GM12878 (cell line): ENCODE measurements at regions of chr21 and their contacts with region 1.

Region 1: GRCh38 chr21:27954543-27955165 is 987.8 kb upstream of the ADAMTS5 start:
- DNase-seq: no peak
- ATAC-seq: no peak
- H3K4me3 ChIP-seq: no peak overlapping the region
- H3K27ac ChIP-seq: no peak overlapping the region
- H3K4me1 ChIP-seq: no peaks in the 10 kb centered on the region
- H3K27me3 ChIP-seq: no peaks in the 10 kb centered on the region
- CTCF ChIP-seq: no peak
- EP300 ChIP-seq: no peak
- POLR2A ChIP-seq: no peak
- RAD21 ChIP-seq: no peak

Region 2: GRCh38 chr21:27787046-27787445 is 167.6 kb before region 1 on chr21:
- CTCF ChIA-PET with region 1: no interaction called
- POLR2A ChIA-PET with region 1: no interaction called
- RAD21 ChIA-PET with region 1: no interaction called
- SMC1A ChIA-PET with region 1: no interaction called
- in situ Hi-C with region 1: no loop called
- intact Hi-C with region 1: no loop called
- DNase-seq: no peak
- ATAC-seq: no peak
- H3K4me3 ChIP-seq: no peak overlapping the region
- H3K27ac ChIP-seq: no peak overlapping the region
- H3K4me1 ChIP-seq: no peaks in the 10 kb centered on the region
- H3K27me3 ChIP-seq: no peaks in the 10 kb centered on the region
- CTCF ChIP-seq: no peak
- EP300 ChIP-seq: no peak
- POLR2A ChIP-seq: no peak
- RAD21 ChIP-seq: no peak

Region 3: GRCh38 chr21:27831816-27832569 is 122.7 kb before region 1 on chr21:
- CTCF ChIA-PET with region 1: no interaction called
- POLR2A ChIA-PET with region 1: no interaction called
- RAD21 ChIA-PET with region 1: no interaction called
- SMC1A ChIA-PET with region 1: no interaction called
- in situ Hi-C with region 1: loop called (anchors 25 kb)
- intact Hi-C with region 1: no loop called
- DNase-seq: no peak
- ATAC-seq: no peak
- H3K4me3 ChIP-seq: no peak overlapping the region
- H3K27ac ChIP-seq: no peak overlapping the region
- H3K4me1 ChIP-seq: no peaks in the 10 kb centered on the region
- H3K27me3 ChIP-seq: no peaks in the 10 kb centered on the region
- CTCF ChIP-seq: no peak
- EP300 ChIP-seq: no peak
- POLR2A ChIP-seq: no peak
- RAD21 ChIP-seq: no peak

Region 4: GRCh38 chr21:28089599-28090441 is 135.2 kb after region 1 on chr21:
- CTCF ChIA-PET with region 1: no interaction called
- POLR2A ChIA-PET with region 1: no interaction called
- RAD21 ChIA-PET with region 1: no interaction called
- SMC1A ChIA-PET with region 1: no interaction called
- in situ Hi-C with region 1: no loop called
- intact Hi-C with region 1: no loop called
- DNase-seq: no peak
- ATAC-seq: no peak
- H3K4me3 ChIP-seq: no peak overlapping the region
- H3K27ac ChIP-seq: no peak overlapping the region
- H3K4me1 ChIP-seq: no peaks in the 10 kb centered on the region
- H3K27me3 ChIP-seq: no peaks in the 10 kb centered on the region
- CTCF ChIP-seq: no peak
- EP300 ChIP-seq: no peak
- POLR2A ChIP-seq: no peak
- RAD21 ChIP-seq: no peak

Region 5: DNA sequence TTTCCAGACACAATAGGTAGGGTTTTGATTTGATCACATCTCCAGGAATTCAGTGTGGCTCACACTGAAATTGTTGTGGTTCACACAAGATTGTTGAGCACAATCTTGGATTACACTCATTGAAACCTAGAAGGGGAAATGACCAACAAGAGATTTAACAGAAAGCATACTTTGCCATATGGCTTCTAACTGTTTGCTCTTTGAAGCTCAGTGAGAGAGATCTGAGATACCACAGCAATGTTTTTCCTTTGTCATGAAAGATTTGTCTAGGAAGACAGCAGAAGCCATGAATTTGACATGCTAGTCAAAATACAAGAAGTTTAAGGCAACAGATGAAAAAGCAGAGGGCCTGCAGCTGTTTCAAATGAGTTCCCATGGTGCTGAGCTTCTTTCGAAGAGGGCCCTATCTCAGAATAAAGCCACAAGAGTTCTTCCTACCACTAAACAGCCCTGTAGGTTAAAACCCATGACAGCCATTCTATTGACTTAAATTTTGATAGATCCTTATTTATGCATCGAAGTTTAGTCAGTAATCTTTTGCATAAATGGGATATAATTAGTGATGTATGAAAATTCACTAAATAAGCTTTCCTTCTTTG is 387.7 kb after region 1 on chr21:
- CTCF ChIA-PET with region 1: no interaction called
- POLR2A ChIA-PET with region 1: no interaction called
- RAD21 ChIA-PET with region 1: no interaction called
- SMC1A ChIA-PET with region 1: no interaction called
- in situ Hi-C with region 1: no loop called
- intact Hi-C with region 1: no loop called
- DNase-seq: no peak
- ATAC-seq: no peak
- H3K4me3 ChIP-seq: no peak overlapping the region
- H3K27ac ChIP-seq: no peak overlapping the region
- H3K4me1 ChIP-seq: no peaks in the 10 kb centered on the region
- H3K27me3 ChIP-seq: no peaks in the 10 kb centered on the region
- CTCF ChIP-seq: no peak
- EP300 ChIP-seq: no peak
- POLR2A ChIP-seq: no peak
- RAD21 ChIP-seq: no peak